Astrocyte of the cerebellum (primary cell): ENCODE measurements at regions of chr1 and their contacts with region 1.

Region 1: DNA sequence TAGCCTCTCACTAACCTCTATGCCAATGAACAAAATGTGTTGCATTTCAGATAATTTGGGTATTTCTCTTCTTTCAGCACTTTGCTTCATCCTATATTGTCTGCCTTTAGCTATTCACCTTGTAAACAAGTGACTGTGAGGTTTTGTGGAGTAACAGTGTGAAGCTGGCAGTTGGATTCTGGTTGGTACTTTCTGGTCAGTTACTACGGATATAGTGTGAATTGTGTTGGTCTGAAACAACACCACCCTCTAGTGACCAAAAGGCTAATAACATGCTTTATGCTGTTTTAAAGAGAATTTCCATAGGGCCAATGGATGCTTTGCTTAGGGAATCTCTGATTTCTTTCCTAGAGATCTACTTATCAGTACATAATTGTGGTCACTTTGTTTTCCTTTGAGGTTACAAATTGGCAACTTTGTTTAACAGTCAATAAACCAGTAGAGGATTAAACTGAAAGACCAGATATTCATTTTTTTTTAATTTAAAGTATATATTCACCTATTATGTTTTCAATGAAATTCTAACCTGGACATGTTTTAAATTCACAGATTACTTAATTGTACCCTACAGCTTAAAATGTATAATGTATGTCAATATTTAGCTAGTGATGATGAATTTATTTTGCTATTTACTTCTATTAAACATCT is 2.5 kb upstream of the PTGER3 start:
- DNase-seq: peak; percentile 71
- H3K4me3 ChIP-seq: no peak overlapping the region
- CTCF ChIP-seq: peak; percentile 71

Region 2: GRCh38 chr1:70227439-70227838 is 822.6 kb before region 1 on chr1:
- in situ Hi-C with region 1: loop called (anchors 25 kb)
- DNase-seq: no peak
- H3K4me3 ChIP-seq: no peak overlapping the region
- CTCF ChIP-seq: no peak

Region 3: DNA sequence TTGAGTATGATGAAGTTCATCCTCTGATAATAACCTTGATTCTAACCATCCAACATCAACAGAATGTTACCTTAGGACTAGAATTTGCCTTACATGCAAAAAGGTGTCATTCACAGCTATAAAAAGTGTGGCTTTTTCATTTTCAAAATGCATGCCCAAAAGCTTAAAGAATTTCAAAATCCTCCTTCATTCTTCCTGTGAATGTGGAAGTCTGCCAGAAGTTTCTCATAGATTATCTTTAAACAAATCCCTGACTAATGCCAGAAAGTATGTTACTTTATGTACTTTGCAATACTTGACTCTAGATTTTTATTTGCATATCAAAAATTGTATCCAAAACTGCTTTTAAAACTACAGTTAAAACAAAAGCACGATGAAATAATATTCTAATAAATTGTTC is 301.4 kb after region 1 on chr1:
- in situ Hi-C with region 1: no loop called
- DNase-seq: peak; percentile 48
- H3K4me3 ChIP-seq: no peak overlapping the region
- CTCF ChIP-seq: no peak